Posterior vena cava (tissue), 2 donors: ENCODE measurements at regions of chr7 and their contacts with region 1.

Region 1: DNA sequence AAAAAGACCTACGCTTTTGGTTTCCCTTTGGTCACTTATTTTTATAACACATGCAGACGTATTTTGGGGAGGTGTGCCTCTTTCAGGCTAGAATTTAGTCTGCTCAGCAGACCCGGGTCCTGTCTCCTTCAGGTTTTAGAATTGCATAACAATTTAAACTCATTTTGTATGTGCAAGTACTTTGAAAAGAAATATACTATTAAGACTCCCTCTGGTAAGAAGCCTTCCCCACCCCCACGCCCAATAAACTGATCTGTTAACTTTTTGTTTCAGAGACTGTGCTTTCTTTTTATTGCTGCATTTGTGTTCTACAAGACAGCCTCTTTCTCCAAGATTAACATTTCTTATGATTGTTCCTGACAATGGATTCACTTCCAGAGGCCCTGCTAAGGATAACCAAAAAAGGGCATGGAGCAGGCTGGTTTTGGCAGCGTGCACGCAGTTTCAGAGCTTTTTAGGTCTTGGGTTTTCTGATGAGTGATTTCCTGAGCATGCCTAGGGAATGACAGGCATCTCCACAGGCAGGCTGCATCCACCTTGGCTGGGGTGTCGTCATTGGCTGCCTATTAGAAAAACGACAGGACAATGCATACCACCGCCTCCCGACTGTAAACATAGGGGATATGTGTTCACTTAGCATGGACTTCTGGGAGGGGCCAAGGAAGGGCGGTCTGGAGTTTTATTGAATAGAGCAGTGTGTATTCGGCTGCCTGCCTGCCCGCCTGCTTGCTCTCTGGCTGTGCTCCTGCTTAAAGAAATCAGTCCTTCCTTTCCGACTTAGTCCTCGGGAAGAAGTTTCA is at the start of gene CALD1:
- DNase-seq: peak; percentile 90
- total RNA-seq, gene CALD1: 1,459 to 1,514 TPM

Region 2: DNA sequence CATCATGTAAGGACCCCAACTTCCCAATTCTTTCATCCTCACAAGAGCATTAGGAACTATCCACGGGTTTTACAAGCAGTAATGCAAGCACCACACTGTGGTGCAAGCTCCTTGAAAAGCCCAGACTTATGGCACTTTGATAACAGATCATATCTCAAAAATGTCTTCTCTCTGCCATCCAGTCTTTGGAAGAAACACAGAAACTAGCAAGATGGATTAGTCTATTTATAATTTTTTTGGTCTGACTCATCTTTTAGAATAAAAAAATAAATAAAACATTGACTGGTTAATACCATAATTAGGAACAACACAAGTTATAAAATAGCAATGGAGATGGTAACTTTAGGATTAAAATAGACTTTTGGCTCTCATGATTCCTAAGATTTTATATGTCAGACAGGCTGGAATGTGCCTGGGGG is 48.7 kb before region 1 on chr7:
- intact Hi-C with region 1: loop called in 1 of 2 experiments (anchors 5 kb)
- DNase-seq: no peak

Region 3: DNA sequence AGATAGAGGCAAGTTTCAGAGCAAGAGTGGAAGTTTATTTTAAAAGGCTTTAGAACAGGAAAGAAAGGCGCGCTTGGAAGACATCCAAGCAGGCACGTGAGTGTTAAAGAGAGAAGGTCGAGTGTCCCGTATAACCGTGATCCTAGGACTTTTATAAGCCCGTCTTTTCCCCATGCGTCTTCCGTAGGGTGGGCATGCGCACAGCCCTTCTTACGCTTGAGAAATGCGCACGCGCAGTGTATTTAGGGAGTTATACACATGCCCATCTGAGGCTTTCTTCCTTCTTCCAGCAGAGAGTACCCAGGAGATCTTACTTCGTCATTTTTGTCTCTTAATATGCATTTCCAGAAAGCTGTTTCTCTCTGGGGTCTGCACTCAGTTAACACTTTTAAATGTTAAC is 52.7 kb after region 1 on chr7:
- intact Hi-C with region 1: loop called in 1 of 2 experiments (anchors 5 kb)
- DNase-seq: no peak

Region 4: GRCh38 chr7:134932707-134933370 is 153.7 kb after region 1 on chr7:
- intact Hi-C with region 1: loop called in 1 of 2 experiments (anchors 10 kb)
- DNase-seq: peak; percentile 93